ENCODE measurements at regions of chr6 and their contacts with region 1.

Region 1: GRCh38 chr6:106300944-106301343 is 24.6 kb downstream of the ATG5 start:
- DNase-seq: peak; percentile 38
- H3K4me3 ChIP-seq: no peak overlapping the region
- H3K27ac ChIP-seq: no peak overlapping the region
- H3K4me1 ChIP-seq: no peaks in the 10 kb centered on the region
- H3K27me3 ChIP-seq: no peaks in the 10 kb centered on the region
- CTCF ChIP-seq: peak; percentile 11 to 29
- POLR2A ChIP-seq: no peak

Region 2: GRCh38 chr6:104940881-104941728 is 1359.8 kb before region 1 on chr6:
- CTCF ChIA-PET with region 1: no interaction called
- POLR2A ChIA-PET with region 1: no interaction called
- dilution Hi-C with region 1: no loop called
- intact Hi-C with region 1: loop called (anchors 5 kb)
- DNase-seq: peak; percentile 33
- H3K4me3 ChIP-seq: peak overlapping the region; percentile 25 to 42 (median 38)
- H3K27ac ChIP-seq: no peak overlapping the region
- H3K4me1 ChIP-seq: peaks cover 4% of the 10 kb centered on the region
- H3K27me3 ChIP-seq: peaks cover 12 to 54% of the 10 kb centered on the region in 2 experiments
- CTCF ChIP-seq: peak; percentile 66 to 74
- POLR2A ChIP-seq: no peak

Region 3: GRCh38 chr6:105733565-105734162 is 567.3 kb before region 1 on chr6:
- CTCF ChIA-PET with region 1: interaction called, 6 read pairs
- POLR2A ChIA-PET with region 1: no interaction called
- dilution Hi-C with region 1: no loop called
- intact Hi-C with region 1: loop called (anchors 1 kb)
- DNase-seq: peak; percentile 13
- H3K4me3 ChIP-seq: no peak overlapping the region
- H3K27ac ChIP-seq: no peak overlapping the region
- H3K4me1 ChIP-seq: no peaks in the 10 kb centered on the region
- H3K27me3 ChIP-seq: peaks cover 0 to 3% of the 10 kb centered on the region in 2 experiments
- CTCF ChIP-seq: peak; percentile 36 to 44
- POLR2A ChIP-seq: no peak

Region 4: GRCh38 chr6:105900125-105900937 is 400.6 kb before region 1 on chr6:
- CTCF ChIA-PET with region 1: no interaction called
- POLR2A ChIA-PET with region 1: no interaction called
- dilution Hi-C with region 1: no loop called
- intact Hi-C with region 1: loop called (anchors 10 kb)
- DNase-seq: peak; percentile 79
- H3K4me3 ChIP-seq: no peak overlapping the region
- H3K27ac ChIP-seq: peak overlapping the region; percentile 44
- H3K4me1 ChIP-seq: peaks cover 2% of the 10 kb centered on the region
- H3K27me3 ChIP-seq: no peaks in the 10 kb centered on the region
- CTCF ChIP-seq: no peak
- POLR2A ChIP-seq: no peak

Region 5: GRCh38 chr6:105992315-105992961 is 308.5 kb before region 1 on chr6:
- CTCF ChIA-PET with region 1: interaction called, 7 read pairs
- POLR2A ChIA-PET with region 1: no interaction called
- dilution Hi-C with region 1: no loop called
- intact Hi-C with region 1: loop called (anchors 10 kb)
- DNase-seq: peak; percentile 76
- H3K4me3 ChIP-seq: peak overlapping the region; percentile 55 to 74 (median 72)
- H3K27ac ChIP-seq: no peak overlapping the region
- H3K4me1 ChIP-seq: peaks cover 22% of the 10 kb centered on the region
- H3K27me3 ChIP-seq: peaks cover 81 to 93% of the 10 kb centered on the region in 2 experiments
- CTCF ChIP-seq: no peak
- POLR2A ChIP-seq: no peak

Region 6: DNA sequence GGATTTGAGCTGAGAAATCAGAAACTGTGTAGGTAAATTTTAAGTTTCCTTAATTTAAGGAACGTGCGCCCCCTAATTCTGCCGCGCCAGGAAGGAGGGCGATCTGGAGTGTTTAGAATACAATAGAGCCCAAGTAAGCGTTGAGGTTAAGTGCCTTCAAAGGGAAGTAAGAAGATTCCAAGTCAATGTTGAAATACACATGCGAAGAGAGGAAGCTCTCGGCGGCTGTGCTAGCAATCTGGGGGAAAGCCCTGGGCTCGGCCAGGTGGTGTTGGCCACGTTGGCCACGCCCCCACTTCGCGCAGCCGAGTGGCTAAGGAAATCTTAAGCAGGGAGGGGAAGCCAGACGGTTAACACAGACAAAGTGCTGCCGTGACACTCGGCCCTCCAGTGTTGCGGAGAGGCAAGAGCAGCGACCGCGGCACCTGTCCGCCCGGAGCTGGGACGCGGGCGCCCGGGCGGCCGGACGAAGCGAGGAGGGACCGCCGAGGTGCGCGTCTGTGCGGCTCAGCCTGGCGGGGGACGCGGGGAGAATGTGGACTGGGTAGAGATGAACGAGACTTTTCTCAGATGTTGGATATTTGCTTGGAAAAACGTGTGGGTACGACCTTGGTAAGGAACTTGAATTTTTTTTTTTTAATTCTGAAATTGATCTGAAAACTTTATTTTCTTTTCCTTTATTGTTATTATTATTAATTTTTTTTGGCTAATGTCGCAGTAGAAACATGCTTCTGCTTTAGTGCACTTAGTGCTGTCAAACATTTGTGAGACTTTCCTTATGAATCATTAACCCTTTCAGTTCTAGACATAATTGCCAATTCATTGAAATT is 214.7 kb before region 1 on chr6 and contains the start of gene PRDM1:
- CTCF ChIA-PET with region 1: interaction called, 5 read pairs
- POLR2A ChIA-PET with region 1: no interaction called
- dilution Hi-C with region 1: no loop called
- intact Hi-C with region 1: loop called (anchors 5 kb)
- DNase-seq: peak; percentile 38
- H3K4me3 ChIP-seq: peak within 1 kb of the TSS; percentile 30 to 67 (median 64)
- H3K27ac ChIP-seq: no peak within 1 kb of the TSS
- H3K4me1 ChIP-seq: peaks cover 19% of the 10 kb centered on the region
- H3K27me3 ChIP-seq: peaks cover 8 to 24% of the 10 kb centered on the region in 2 experiments
- CTCF ChIP-seq: no peak
- POLR2A ChIP-seq: no peak
- total RNA-seq, gene PRDM1: 2.7 and 4.8 TPM in 2 replicates

Region 7: DNA sequence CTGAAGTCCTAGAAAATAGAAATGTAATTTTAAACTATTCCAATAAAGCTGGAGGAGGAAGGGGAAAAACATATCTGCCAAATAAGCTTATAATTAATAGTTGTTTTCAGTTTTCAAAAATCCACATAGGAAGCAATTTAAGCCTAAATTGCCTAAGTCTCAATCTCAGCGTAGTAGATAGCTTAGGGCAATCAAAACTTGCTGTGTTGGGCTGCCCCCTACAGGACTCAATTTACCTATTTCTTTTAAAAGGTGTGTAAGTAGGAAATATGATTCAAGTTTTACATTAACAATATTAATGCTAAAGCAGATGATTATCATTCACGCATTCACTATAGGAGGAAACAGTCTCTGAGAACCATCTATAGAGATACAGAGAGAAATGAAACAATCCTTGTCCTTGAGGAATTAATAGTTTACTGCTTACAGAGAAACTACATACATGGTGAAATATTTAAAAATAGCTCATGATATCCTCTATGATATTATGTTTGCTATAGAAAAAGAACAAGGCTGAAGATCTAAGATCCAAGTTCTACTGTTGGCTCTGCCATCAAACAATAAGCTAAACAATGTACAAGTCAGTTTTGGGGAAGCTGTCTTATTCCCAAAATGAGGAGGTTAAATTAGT is 77.5 kb before region 1 on chr6:
- CTCF ChIA-PET with region 1: interaction called, 6 read pairs
- POLR2A ChIA-PET with region 1: no interaction called
- dilution Hi-C with region 1: no loop called
- intact Hi-C with region 1: loop called (anchors 1 kb)
- DNase-seq: peak; percentile 75
- H3K4me3 ChIP-seq: no peak overlapping the region
- H3K27ac ChIP-seq: no peak overlapping the region
- H3K4me1 ChIP-seq: no peaks in the 10 kb centered on the region
- H3K27me3 ChIP-seq: no peaks in the 10 kb centered on the region
- CTCF ChIP-seq: peak; percentile 26 to 38
- POLR2A ChIP-seq: no peak

Region 8: DNA sequence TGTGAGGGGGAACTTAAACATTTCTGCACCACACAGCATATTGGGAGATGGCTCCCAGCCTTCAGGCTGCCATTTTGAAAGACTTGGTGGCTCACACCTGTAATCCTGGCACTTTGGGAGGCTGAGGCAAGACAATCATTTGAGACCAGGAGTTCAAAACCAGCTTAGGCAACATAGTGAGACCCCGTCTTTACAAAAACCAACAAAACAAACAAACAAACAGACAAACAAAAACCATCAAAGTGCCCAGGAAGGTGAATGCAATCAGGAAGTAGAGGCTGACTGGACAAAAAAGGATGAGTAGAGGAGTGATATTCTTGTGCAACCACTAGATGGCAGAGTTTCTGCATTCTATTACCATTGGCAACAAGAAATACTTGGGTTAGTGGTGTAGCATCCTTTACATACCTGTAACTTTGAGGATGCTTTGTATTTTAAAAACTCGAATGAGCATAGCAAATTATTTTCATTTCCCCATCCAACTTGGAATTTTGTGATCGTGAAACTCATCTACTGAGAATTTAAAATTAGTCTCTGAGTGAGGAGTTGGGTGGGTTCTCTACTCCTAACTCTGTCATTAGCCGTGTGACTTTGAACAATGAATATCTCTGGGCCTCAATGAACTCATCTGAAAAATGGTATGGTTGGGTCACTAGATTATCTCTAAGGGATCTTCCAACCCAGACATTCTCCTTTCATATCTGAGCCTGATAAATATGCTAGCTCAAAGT is 144.0 kb after region 1 on chr6:
- CTCF ChIA-PET with region 1: no interaction called
- POLR2A ChIA-PET with region 1: no interaction called
- dilution Hi-C with region 1: no loop called
- intact Hi-C with region 1: no loop called
- DNase-seq: peak; percentile 52
- H3K4me3 ChIP-seq: no peak overlapping the region
- H3K27ac ChIP-seq: no peak overlapping the region
- H3K4me1 ChIP-seq: no peaks in the 10 kb centered on the region
- H3K27me3 ChIP-seq: peaks cover 14 to 29% of the 10 kb centered on the region in 2 experiments
- CTCF ChIP-seq: peak; percentile 61 to 68
- POLR2A ChIP-seq: no peak

Measured in endothelial cell of umbilical vein (primary cell).